Sciatic nerve (tissue), 2 donors: ENCODE measurements at regions of chr15 and their contacts with region 1.

Region 1: GRCh38 chr15:51380999-51381795 is 39.7 kb downstream of the GLDN start:
- DNase-seq: peak; percentile 67
- ATAC-seq: peak; percentile 87

Region 2: GRCh38 chr15:51281368-51281967 is 99.7 kb before region 1 on chr15:
- intact Hi-C with region 1: loop called (anchors 10 kb)
- DNase-seq: peak; percentile 81
- ATAC-seq: peak; percentile 85

Region 3: DNA sequence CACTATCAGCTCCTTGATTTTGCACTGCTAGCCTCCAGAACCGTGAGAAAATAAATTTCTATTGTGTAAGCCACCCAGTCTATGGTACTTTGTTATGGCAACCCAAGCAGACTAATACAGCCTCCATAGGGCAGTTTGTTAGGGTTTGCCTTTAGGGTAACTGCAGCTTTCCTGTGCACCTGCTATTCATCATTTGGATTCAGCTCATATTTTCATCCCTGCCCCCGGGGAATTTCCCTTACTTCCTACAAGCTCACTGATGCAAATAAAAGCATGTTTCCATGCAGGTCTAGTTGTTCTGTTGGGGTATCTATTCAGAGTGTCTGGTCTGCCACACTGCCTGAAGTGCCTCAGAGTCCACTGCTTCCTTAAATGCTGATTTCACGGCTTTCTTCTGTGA is 1346.6 kb after region 1 on chr15:
- intact Hi-C with region 1: no loop called
- DNase-seq: no peak
- ATAC-seq: no peak